Right ventricle myocardium inferior (tissue), 1 donor: ENCODE measurements at regions of chr2 and their contacts with region 1.

Region 1: GRCh38 chr2:33475224-33476130 is 972 bp upstream of the RASGRP3 start:
- DNase-seq: no peak
- ATAC-seq: peak; percentile 66

Region 2: GRCh38 chr2:33529771-33530351 is 54.4 kb after region 1 on chr2:
- intact Hi-C with region 1: loop called (anchors 5 kb)
- DNase-seq: no peak
- ATAC-seq: no peak

Region 3: GRCh38 chr2:33583194-33583938 is 107.9 kb after region 1 on chr2:
- intact Hi-C with region 1: loop called (anchors 5 kb)
- DNase-seq: no peak
- ATAC-seq: no peak